Activated CD4-positive, alpha-beta T cell treated with anti-CD3 and anti-CD28 coated beads, Interleukin-2, amount 10 ng/mL, durations not matched to agents 7 days and 5 days (primary cell): ENCODE measurements at regions of chr4 and their contacts with region 1.

Region 1: DNA sequence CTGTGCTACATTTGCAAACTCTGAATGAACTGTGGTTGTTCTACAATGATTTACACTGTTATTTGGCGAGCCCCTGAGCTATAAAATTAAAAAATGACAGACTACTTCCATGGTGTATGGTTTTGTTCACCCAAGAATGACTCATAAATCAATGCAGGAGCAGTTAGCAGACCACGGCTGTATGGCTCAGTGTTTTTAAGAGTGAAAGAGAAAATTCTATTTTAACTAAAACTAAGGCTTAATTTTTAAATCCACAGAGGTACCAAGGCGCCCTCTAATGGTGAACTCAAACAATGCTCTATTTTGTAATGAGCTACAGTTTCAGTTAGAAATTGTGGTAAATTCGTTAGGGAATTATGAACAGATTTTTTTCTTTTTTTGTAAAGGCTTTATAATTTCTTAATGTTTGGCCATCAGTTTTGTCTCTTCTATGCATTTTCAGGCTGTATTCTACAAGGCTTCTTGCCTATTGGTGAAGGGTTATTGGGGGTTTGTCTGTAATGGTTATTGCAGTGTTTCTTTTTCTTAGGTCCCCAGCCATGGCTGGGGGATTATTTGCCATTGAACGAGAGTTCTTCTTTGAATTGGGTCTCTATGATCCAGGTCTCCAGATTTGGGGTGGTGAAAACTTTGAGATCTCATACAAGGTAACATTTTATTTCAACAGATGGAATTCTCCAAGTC is 32.5 kb downstream of the HMGB2 start:
- DNase-seq: peak; percentile 52
- H3K4me3 Mint-ChIP-seq: no peak overlapping the region
- H3K27ac Mint-ChIP-seq: no peak overlapping the region
- H3K4me1 Mint-ChIP-seq: peaks cover 4% of the 10 kb centered on the region
- H3K27me3 Mint-ChIP-seq: no peaks in the 10 kb centered on the region

Region 2: DNA sequence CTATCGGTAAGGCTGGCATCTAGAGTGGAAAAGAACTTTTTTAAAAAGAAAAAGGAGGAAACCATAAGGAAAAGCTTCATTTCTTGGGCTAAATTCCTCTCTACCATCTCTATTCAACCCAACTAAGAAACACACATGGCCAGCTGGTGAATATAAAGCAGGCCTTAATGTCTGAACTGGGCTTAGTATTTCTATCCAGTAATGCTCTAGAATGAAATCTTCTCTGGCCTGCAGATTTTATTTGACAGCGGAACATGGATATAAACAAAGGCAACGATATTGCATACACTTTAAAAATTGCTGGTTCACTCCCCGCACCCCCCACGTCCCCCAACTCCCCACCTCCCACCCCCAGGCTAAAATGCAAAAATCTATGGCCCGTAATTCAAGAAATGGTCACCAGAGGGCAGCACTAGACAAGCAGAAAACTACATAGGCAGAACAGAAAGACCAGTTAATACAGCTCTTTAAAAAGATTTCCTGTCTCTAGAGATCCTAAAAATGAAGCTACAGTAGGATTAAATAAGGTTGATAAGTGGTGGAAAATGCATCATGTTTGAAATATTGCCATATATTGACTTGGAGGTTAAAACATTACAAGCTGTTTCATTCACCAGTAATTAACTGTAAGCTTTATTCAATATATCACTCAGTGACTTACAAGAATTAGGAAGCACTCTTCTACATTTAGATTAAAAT is 288.3 kb before region 1 on chr4:
- CTCF ChIA-PET with region 1: interaction called, 12 read pairs
- POLR2A ChIA-PET with region 1: no interaction called
- DNase-seq: peak; percentile 65
- H3K4me3 Mint-ChIP-seq: no peak overlapping the region
- H3K27ac Mint-ChIP-seq: no peak overlapping the region
- H3K4me1 Mint-ChIP-seq: no peaks in the 10 kb centered on the region
- H3K27me3 Mint-ChIP-seq: peaks cover 4% of the 10 kb centered on the region

Region 3: GRCh38 chr4:173146451-173146850 is 155.2 kb before region 1 on chr4:
- CTCF ChIA-PET with region 1: no interaction called
- POLR2A ChIA-PET with region 1: no interaction called
- DNase-seq: no peak
- H3K4me3 Mint-ChIP-seq: no peak overlapping the region
- H3K27ac Mint-ChIP-seq: no peak overlapping the region
- H3K4me1 Mint-ChIP-seq: no peaks in the 10 kb centered on the region
- H3K27me3 Mint-ChIP-seq: peaks cover 2% of the 10 kb centered on the region

Region 4: DNA sequence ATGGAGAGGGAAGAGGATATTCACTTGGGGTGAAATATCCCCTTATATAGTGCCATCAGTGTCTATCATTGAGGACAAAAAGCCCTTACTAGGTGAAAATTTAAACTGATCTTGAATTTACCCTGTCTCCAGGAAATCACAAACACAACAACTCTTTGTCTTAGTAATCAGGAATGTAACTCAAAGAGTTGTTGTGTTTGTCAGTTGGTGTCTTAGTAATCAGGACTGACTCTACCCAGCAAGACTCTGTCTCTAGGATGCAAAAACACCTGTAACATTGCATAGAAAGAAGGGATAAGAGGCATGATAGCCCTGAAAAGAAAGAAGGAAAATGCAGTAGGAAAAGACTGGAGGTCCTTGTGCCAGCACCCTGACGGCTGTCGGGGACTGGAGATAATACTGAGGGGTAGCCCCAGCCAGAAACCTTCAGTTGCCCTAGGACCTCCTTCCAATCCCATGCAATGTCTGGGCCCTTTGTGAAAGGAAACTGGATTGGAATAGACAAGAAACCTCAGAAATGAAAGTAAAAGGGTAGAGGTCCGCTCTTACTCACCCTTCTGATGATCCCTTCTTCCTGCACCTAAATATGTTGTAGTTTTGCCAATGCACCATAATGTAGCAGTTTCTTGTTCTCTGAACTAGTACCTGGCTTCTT is 12.8 kb before region 1 on chr4:
- CTCF ChIA-PET with region 1: interaction called, 15 read pairs
- POLR2A ChIA-PET with region 1: no interaction called
- DNase-seq: no peak
- H3K4me3 Mint-ChIP-seq: peak overlapping the region; percentile 70
- H3K27ac Mint-ChIP-seq: peak overlapping the region; percentile 74
- H3K4me1 Mint-ChIP-seq: peaks cover 18% of the 10 kb centered on the region
- H3K27me3 Mint-ChIP-seq: no peaks in the 10 kb centered on the region

Region 5: GRCh38 chr4:173314715-173315114 is 13.1 kb after region 1 on chr4:
- CTCF ChIA-PET with region 1: interaction called, 15 read pairs
- POLR2A ChIA-PET with region 1: no interaction called
- DNase-seq: no peak
- H3K4me3 Mint-ChIP-seq: no peak overlapping the region
- H3K27ac Mint-ChIP-seq: no peak overlapping the region
- H3K4me1 Mint-ChIP-seq: peaks cover 10% of the 10 kb centered on the region
- H3K27me3 Mint-ChIP-seq: no peaks in the 10 kb centered on the region

Region 6: GRCh38 chr4:173866322-173867026 is 564.8 kb after region 1 on chr4:
- CTCF ChIA-PET with region 1: no interaction called
- POLR2A ChIA-PET with region 1: no interaction called
- DNase-seq: no peak
- H3K4me3 Mint-ChIP-seq: no peak overlapping the region
- H3K27ac Mint-ChIP-seq: no peak overlapping the region
- H3K4me1 Mint-ChIP-seq: no peaks in the 10 kb centered on the region
- H3K27me3 Mint-ChIP-seq: no peaks in the 10 kb centered on the region